CD4-positive, alpha-beta memory T cell (primary cell): ENCODE measurements at regions of chr3 and their contacts with region 1.

Region 1: DNA sequence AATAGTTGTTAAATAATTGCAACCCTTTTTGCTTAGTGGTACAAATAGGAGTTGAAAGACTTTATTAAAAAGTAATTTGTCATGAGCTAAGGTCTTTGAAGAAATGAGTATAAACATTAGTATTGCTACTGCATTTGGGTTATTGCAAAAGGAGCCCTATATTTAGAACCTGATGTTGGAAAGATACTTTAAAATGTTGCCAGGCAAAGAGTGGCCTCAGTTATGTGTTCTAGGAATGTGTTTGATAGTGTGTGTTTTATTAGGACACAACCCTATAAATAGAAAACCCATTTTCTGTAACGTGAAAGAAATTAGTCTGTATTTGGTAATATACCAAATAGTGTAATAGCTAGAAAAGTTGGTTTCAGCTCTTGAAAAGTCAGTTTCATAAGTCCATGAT is 10.7 kb downstream of the VPS8 start:
- DNase-seq: no peak
- H3K4me3 ChIP-seq: no peak overlapping the region
- H3K4me3 Mint-ChIP-seq: no peak overlapping the region
- H3K27ac ChIP-seq: no peak overlapping the region
- H3K27ac Mint-ChIP-seq: no peak overlapping the region
- H3K4me1 ChIP-seq: no peaks in the 10 kb centered on the region
- H3K4me1 Mint-ChIP-seq: peaks cover 5 to 21% (median 12%) of the 10 kb centered on the region in 4 donors
- H3K27me3 ChIP-seq: no peaks in the 10 kb centered on the region
- H3K27me3 Mint-ChIP-seq: no peaks in the 10 kb centered on the region

Region 2: DNA sequence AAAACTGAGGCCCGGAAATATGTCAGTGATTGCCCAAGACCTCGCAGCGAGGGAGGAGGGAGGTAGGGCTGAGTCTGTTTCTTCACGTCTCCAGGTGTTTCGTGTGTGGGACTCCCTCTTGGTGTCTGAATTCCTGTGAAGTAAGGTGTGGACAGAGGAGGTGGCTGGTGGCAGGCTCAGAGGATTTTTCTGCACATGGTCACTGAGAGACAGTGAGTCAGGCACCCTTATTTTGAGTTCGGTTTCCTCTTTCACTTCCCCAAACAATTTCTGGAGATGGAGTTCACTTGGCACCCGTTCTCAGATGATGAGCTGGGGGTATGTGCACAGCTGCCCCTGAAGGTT is 57.0 kb before region 1 on chr3:
- CTCF ChIA-PET with region 1: no interaction called
- POLR2A ChIA-PET with region 1: no interaction called
- intact Hi-C with region 1: no loop called
- DNase-seq: no peak
- H3K4me3 ChIP-seq: no peak overlapping the region
- H3K4me3 Mint-ChIP-seq: no peak overlapping the region
- H3K27ac ChIP-seq: no peak overlapping the region
- H3K27ac Mint-ChIP-seq: peak overlapping the region in 1 of 7 donors; percentile 44
- H3K4me1 ChIP-seq: no peaks in the 10 kb centered on the region
- H3K4me1 Mint-ChIP-seq: peaks cover 0 to 5% (median under 1%) of the 10 kb centered on the region in 4 donors
- H3K27me3 ChIP-seq: no peaks in the 10 kb centered on the region
- H3K27me3 Mint-ChIP-seq: peaks cover 13 to 20% of the 10 kb centered on the region in 2 donors

Region 3: DNA sequence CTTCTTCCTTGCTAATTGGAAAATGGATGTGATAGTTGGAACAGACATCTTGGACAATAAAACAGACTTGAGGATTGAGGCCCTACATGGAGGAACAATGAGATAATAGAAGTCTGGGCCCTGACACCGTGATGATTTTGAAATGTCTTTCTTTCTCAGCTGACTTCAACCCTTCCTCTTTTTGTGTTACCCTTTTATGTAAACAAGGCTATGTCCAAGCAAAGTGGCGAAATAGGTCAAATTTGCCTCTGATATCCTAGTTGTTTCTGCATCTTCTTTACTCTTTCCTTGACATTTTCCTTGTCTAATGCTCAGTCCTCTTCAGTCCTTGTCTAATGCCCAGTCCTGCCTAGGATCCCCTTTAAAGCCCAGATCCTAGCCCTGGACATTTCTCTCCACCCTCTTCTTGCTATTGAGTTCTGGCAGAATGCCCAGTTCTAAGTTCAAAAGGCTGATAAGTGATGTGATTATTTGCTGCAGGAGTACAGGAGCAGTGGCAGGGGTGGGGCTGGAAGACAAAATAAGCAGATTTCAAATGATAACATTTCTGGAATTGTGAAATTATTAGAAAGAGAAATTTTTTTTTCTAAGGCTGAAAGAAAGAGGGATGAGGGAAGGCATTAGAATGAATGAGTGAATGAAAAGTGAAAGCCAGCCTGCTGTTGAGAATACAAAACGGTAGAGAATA is 17.2 kb before region 1 on chr3:
- CTCF ChIA-PET with region 1: interaction called, 13 read pairs
- POLR2A ChIA-PET with region 1: no interaction called
- intact Hi-C with region 1: no loop called
- DNase-seq: no peak
- H3K4me3 ChIP-seq: no peak overlapping the region
- H3K4me3 Mint-ChIP-seq: no peak overlapping the region
- H3K27ac ChIP-seq: no peak overlapping the region
- H3K27ac Mint-ChIP-seq: no peak overlapping the region
- H3K4me1 ChIP-seq: no peaks in the 10 kb centered on the region
- H3K4me1 Mint-ChIP-seq: no peaks in the 10 kb centered on the region
- H3K27me3 ChIP-seq: no peaks in the 10 kb centered on the region
- H3K27me3 Mint-ChIP-seq: peaks cover 10 to 16% of the 10 kb centered on the region in 2 donors

Region 4: GRCh38 chr3:184811999-184812661 is 10.5 kb before region 1 on chr3 and contains the start of gene VPS8:
- CTCF ChIA-PET with region 1: interaction called, 13 read pairs
- POLR2A ChIA-PET with region 1: interaction called, 4 read pairs
- intact Hi-C with region 1: no loop called
- DNase-seq: peak; percentile 96 to 97 (median 96)
- H3K4me3 ChIP-seq: peak within 1 kb of the TSS; percentile 83 to 88
- H3K4me3 Mint-ChIP-seq: peak within 1 kb of the TSS; percentile 96 to 99 (median 98)
- H3K27ac ChIP-seq: peak within 1 kb of the TSS; percentile 79
- H3K27ac Mint-ChIP-seq: peak within 1 kb of the TSS; percentile 93 to 99 (median 97)
- H3K4me1 ChIP-seq: peaks cover 46% of the 10 kb centered on the region
- H3K4me1 Mint-ChIP-seq: peaks cover 31 to 54% (median 44%) of the 10 kb centered on the region in 4 donors
- H3K27me3 ChIP-seq: no peaks in the 10 kb centered on the region
- H3K27me3 Mint-ChIP-seq: peaks cover 4 to 5% of the 10 kb centered on the region in 2 donors
- total RNA-seq, gene VPS8: 83.9 to 85.9 TPM